ENCODE measurements at regions of chr11 and their contacts with region 1.

Region 1: DNA sequence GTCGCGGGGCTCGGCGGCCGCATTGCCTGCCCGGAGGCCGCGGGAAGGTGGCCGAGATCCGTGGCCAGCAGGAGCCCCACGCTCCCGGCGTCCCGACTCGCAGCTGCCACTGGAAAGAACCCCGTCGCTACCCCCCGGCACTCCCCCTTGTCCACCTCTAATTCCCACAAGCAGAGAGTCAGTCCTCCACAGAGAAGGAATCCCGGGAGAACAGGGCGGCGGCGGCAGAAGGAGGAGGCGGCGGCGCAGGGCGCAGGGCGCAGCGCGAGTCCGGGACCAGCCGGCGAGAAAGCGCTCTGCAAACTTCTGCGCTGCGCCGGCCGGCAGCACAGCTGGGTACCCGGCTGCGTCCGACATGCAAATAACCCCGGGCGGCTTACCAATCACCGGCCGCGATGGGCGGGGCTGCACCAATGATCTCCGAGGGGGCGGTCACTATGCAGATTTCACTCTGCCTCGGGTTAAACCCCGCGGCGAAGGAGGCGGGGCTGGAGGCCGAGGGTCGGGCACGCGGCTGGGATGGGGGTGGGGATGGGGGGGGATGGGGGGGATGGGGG is at the start of gene ABTB2:
- DNase-seq: peak; percentile 99
- ATAC-seq: peak; percentile 95
- total RNA-seq, gene ABTB2: 14.3 TPM

Region 2: DNA sequence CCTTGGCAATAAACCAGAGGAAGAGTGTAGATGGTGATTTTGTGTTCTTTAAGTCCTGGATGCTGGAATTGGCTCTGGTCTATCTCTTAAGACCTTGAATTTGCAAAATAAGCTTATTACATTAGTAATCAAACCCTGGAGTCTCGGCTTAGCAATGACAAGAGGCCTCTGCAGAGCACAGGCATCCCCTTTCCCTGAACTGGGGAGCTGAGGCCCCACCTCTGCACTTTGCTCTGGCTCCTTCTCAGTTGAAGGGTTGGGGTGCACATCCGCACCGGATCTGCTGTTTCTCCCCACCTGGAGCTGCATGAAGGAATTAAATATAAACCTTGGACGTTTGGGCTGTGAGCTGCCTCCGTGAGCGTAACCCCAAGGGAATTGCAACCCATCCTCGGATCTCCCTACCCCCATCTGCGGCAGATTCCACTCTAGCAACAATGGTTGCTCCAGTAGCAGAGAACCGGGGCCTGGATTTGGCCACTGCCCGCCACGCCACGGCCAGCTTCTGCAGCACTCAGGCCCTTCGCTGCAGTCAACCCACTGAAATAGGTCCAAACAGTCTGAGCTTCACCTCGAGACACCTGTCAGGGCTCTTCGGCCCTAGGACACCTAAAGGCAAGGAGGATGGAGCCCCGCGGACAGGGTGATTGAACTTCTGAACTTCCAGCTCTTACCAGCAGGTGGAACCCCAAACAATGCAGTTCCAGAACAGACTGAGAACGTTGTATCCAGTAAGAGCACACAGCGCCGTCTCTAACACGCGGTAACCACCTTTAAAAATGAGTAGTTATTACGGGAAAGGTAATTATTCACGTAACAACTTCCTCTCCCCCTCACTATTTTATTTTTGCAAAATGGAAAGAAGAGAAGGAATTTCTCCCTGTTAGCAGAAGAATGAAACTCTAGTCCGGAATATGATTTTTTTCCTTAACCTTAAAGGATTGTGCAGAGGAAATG is 361.0 kb before region 1 on chr11:
- intact Hi-C with region 1: loop called (anchors 1 kb)
- DNase-seq: no peak
- ATAC-seq: peak; percentile 94

Region 3: DNA sequence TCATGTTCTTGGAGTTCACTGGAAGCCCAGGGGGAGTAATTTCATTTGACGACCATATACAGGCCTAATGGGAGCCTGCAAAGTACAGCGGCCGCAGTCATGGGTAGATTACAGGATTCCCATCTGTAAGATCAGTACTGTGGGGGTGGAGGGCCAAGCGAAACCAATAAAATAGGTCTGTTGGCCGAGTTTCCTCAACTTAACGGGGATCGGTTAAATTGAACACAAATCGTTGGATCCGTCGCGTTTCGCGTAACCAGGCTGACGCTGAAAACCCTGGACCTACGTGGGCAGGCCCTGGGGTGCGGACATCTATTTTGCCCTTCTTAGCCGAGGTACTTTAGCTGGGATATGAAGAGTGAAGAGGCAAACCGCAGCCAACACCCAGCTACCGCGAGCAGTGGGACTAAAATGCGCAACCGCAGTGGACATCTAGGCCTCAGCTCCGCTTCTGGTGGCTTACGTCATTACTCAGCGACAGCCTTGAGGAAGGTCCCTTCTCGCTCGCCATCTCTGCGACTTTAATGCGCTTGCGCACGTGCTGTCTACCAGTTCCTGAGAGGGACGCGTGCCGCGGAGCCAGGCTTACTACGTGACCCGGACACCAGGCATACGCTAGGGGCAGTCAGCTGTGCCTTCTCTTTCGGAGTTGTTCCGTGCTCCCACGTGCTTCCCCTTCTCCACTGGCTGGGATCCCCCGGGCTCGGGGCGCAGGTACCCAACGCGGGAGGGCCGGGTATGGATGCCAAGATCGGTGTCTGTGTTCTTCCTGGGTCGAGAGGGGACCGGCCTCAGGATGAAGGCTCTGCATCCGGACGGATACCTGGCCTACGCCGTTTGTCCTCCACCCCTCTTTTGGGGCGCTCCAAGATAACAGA is 252.5 kb before region 1 on chr11 and contains the start of gene NAT10:
- intact Hi-C with region 1: loop called (anchors 1 kb)
- DNase-seq: peak; percentile 98
- ATAC-seq: peak; percentile 98
- total RNA-seq, gene NAT10: 22.8 TPM

Region 4: GRCh38 chr11:34274723-34275401 is 82.9 kb before region 1 on chr11:
- intact Hi-C with region 1: loop called (anchors 5 kb)
- DNase-seq: peak; percentile 85
- ATAC-seq: peak; percentile 90

Region 5: DNA sequence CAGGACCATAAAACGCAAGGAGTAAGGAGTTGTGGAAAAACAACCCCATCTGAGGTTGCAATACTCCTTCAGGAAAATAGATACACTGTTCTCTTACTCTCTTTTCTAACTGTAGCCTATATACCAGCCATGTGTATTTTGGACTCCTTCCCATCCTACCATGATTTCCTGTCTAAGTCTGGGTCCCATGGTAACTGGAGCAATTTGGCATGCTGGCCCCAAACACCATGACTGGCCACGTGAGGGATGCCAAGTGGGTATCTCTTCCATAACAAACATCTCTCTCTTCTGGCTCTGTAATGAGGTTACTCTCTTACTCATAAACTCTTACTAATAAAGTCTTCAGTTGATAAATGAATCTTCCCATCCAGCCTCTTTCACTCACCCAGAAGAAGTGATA is 26.4 kb before region 1 on chr11:
- intact Hi-C with region 1: no loop called
- DNase-seq: no peak
- ATAC-seq: no peak

Measured in Right ventricle myocardium inferior (tissue), 1 donor.